ENCODE measurements at regions of chr9 and their contacts with region 1.

Region 1: DNA sequence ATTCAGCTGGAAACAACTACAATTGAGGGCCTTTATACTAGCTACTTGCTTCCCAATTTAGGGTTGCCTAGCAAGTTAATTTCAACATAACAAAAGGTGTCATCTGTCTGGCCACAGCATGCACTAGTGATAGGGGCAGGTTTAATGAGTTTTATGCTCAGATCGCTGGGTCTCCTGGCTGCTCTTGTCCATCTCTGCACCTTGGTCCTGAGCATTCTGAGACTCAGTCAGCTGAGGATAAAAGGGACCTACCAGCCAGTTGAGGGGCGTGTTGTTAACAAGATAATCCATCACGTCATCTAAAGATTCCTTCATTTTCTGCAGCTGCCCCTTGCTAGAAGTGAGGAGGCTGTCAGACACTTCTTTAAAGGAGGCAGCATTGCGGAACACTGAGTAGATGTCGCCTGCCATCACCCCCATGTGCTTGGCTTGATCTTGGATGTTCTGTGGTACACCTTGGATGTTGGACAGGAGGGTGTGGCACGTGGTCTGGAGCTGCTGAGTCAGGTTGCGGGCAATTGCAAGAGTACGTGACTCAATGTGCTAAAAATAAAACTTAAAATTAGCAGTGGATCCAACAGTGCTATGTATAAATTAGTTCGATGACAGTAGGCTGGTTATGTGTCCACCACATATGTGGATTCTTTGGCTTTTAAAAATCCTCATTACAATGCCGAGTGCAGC is 11.0 kb downstream of the PLIN2 start:
- DNase-seq: no peak
- H3K4me3 ChIP-seq: no peak overlapping the region
- H3K27me3 ChIP-seq: no peaks in the 10 kb centered on the region
- CTCF ChIP-seq: no peak

Region 2: DNA sequence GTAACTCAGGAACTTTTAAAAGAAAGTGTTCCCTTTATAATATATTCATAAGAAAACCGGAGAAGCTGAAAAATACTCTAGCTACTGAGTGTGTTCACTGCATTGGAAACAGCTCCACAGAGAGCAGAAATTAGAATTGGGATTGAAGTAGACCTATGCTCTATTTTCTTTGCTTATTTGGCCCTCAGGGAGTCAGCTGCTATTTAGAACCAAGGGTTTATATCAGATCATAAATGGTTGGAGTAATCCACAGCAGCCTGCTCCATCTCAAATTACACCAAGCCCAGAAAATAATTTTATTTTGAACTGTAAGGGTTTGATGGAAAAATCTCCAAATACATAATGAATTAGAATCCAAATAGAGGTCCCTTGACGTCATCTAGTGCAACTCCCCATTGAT is 439.7 kb before region 1 on chr9:
- CTCF ChIA-PET with region 1: no interaction called
- POLR2A ChIA-PET with region 1: interaction called, 18 read pairs
- DNase-seq: no peak
- H3K4me3 ChIP-seq: no peak overlapping the region
- H3K27me3 ChIP-seq: no peaks in the 10 kb centered on the region
- CTCF ChIP-seq: no peak

Region 3: GRCh38 chr9:20220286-20220685 is 1104.0 kb after region 1 on chr9:
- CTCF ChIA-PET with region 1: no interaction called
- POLR2A ChIA-PET with region 1: interaction called, 11 read pairs
- DNase-seq: no peak
- H3K4me3 ChIP-seq: no peak overlapping the region
- H3K27me3 ChIP-seq: peaks cover 3% of the 10 kb centered on the region; the same call in 1 of the 2 replicates
- CTCF ChIP-seq: no peak

Measured in BJ (cell line).